PC-3 (cell line): ENCODE measurements at regions of chr1 and their contacts with region 1.

Region 1: GRCh38 chr1:77322061-77322900 is 40.5 kb downstream of the AK5 start:
- DNase-seq: peak; percentile 97
- ATAC-seq: peak; percentile 97
- H3K4me3 ChIP-seq: no peak overlapping the region
- H3K27ac ChIP-seq: peak overlapping the region; percentile 96
- H3K4me1 ChIP-seq: peaks cover 37% of the 10 kb centered on the region
- H3K27me3 ChIP-seq: no peaks in the 10 kb centered on the region
- CTCF ChIP-seq: no peak

Region 2: GRCh38 chr1:77202751-77203150 is 119.5 kb before region 1 on chr1:
- CTCF ChIA-PET with region 1: no interaction called
- POLR2A ChIA-PET with region 1: no interaction called
- intact Hi-C with region 1: no loop called
- DNase-seq: no peak
- ATAC-seq: no peak
- H3K4me3 ChIP-seq: no peak overlapping the region
- H3K27ac ChIP-seq: no peak overlapping the region
- H3K4me1 ChIP-seq: no peaks in the 10 kb centered on the region
- H3K27me3 ChIP-seq: no peaks in the 10 kb centered on the region
- CTCF ChIP-seq: no peak

Region 3: GRCh38 chr1:77288275-77288674 is 34.0 kb before region 1 on chr1:
- CTCF ChIA-PET with region 1: no interaction called
- POLR2A ChIA-PET with region 1: no interaction called
- intact Hi-C with region 1: no loop called
- DNase-seq: peak; percentile 53
- ATAC-seq: peak; percentile 83
- H3K4me3 ChIP-seq: no peak overlapping the region
- H3K27ac ChIP-seq: peak overlapping the region; percentile 33
- H3K4me1 ChIP-seq: peaks cover 11% of the 10 kb centered on the region
- H3K27me3 ChIP-seq: no peaks in the 10 kb centered on the region
- CTCF ChIP-seq: no peak

Region 4: GRCh38 chr1:77342745-77343144 is 20.5 kb after region 1 on chr1:
- CTCF ChIA-PET with region 1: no interaction called
- POLR2A ChIA-PET with region 1: no interaction called
- intact Hi-C with region 1: loop called (anchors 1 kb)
- DNase-seq: peak; percentile 81
- ATAC-seq: peak; percentile 97
- H3K4me3 ChIP-seq: no peak overlapping the region
- H3K27ac ChIP-seq: peak overlapping the region; percentile 68
- H3K4me1 ChIP-seq: peaks cover 27% of the 10 kb centered on the region
- H3K27me3 ChIP-seq: no peaks in the 10 kb centered on the region
- CTCF ChIP-seq: no peak

Region 5: GRCh38 chr1:77533660-77534305 is 211.5 kb after region 1 on chr1:
- CTCF ChIA-PET with region 1: no interaction called
- POLR2A ChIA-PET with region 1: no interaction called
- intact Hi-C with region 1: loop called (anchors 10 kb)
- DNase-seq: peak; percentile 65
- ATAC-seq: peak; percentile 32
- H3K4me3 ChIP-seq: no peak overlapping the region
- H3K27ac ChIP-seq: no peak overlapping the region
- H3K4me1 ChIP-seq: peaks cover 31% of the 10 kb centered on the region
- H3K27me3 ChIP-seq: no peaks in the 10 kb centered on the region
- CTCF ChIP-seq: peak; percentile 88